ENCODE measurements at regions of chr21 and their contacts with region 1.

Region 1: DNA sequence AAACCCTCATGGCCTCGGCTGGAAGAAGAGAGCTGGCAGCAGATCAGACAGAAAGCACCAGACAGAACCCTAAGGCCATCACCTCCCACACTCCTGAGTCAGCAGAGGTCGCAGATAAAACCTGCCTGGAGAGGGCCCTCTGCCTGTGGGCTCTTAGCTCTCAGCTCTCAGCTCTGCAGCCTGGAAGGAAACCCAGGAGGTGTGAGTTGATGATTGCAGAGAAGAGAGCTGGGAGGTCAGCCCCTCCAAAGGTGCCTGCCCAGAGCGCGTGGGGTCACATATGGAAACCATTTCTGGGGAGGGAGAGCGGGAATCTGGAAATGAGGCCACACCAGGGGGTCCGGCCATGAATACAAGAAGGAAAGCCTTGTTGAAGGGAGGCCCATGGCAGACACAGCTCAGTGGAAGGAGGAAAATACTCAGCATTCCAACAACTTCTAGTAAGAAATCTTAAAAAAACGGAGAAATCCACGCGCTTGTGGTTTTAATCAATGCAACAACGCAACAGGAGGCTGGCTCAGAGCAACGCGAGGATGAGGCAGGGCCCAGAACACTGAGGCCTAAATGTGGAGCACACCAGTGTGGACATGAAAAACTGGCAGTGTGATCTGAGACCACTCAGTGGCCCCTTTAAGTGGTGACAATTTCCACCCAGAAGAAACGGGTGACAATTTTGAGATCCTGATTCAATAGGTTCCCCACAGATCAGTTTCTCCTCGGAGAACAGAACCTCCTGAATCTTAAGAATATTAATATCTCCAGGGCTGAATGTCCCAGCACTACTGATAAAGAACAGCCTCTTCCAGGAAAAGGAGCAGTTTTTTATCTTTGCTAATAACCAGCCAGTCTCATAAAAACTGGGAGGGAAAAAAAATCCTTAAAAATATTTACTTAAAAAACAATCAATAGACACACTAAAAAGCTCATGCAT is 45.7 kb downstream of the PSMG1 start:
- DNase-seq: no peak
- H3K4me3 ChIP-seq: no peak overlapping the region
- H3K27ac ChIP-seq: no peak overlapping the region
- H3K4me1 ChIP-seq: no peaks in the 10 kb centered on the region
- CTCF ChIP-seq: no peak

Region 2: GRCh38 chr21:38219049-38219628 is 918.4 kb before region 1 on chr21:
- CTCF ChIA-PET with region 1: no interaction called
- POLR2A ChIA-PET with region 1: no interaction called
- intact Hi-C with region 1: loop called (anchors 10 kb)
- DNase-seq: peak; percentile 53
- H3K4me3 ChIP-seq: no peak overlapping the region
- H3K27ac ChIP-seq: no peak overlapping the region
- H3K4me1 ChIP-seq: no peaks in the 10 kb centered on the region
- CTCF ChIP-seq: peak; percentile 96

Region 3: GRCh38 chr21:38505654-38506515 is 631.6 kb before region 1 on chr21:
- CTCF ChIA-PET with region 1: no interaction called
- POLR2A ChIA-PET with region 1: no interaction called
- intact Hi-C with region 1: loop called (anchors 2 kb)
- DNase-seq: peak; percentile 48
- H3K4me3 ChIP-seq: no peak overlapping the region
- H3K27ac ChIP-seq: no peak overlapping the region
- H3K4me1 ChIP-seq: no peaks in the 10 kb centered on the region
- CTCF ChIP-seq: peak; percentile 77

Region 4: DNA sequence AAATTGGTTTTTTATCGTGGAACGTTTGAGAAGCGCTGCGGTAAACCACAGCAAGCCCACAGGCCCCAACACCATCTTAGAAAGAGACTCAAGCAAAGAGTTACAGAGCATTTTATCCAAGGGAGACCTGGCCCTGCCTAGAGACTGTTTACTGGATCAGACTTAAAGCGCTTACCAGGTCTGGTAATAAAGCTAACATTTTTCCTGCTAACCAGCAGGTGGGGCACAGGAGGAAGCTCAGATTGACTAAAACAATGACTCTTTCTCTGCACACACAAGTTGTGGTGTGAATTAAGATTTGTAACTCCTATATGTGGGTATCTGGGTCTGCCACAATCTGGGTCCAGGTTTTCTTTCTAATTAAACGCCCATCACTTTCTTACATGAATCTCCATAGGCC is 468.3 kb before region 1 on chr21:
- CTCF ChIA-PET with region 1: no interaction called
- POLR2A ChIA-PET with region 1: no interaction called
- intact Hi-C with region 1: loop called (anchors 2 kb)
- DNase-seq: peak; percentile 19
- H3K4me3 ChIP-seq: no peak overlapping the region
- H3K27ac ChIP-seq: no peak overlapping the region
- H3K4me1 ChIP-seq: no peaks in the 10 kb centered on the region
- CTCF ChIP-seq: peak; percentile 65

Region 5: DNA sequence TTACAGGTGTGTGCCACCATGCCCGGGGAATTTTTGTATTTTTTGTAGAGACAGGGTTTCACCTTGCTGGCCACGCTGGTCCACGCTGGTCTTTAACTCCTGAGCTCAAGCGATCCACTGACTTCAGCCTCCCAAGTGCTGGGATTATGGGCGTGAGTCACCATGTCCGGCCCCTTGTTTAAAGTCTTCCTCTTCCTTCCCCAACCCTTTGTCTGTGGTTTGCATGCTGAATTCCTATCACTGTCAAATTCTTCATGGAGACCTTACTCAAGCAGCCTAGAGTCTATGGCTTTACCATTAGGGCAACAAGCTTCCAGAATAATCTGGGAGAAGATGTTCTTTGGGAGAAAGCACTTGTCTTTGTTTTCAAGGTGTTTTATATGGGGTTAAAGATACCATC is 510.0 kb after region 1 on chr21:
- CTCF ChIA-PET with region 1: no interaction called
- POLR2A ChIA-PET with region 1: no interaction called
- intact Hi-C with region 1: no loop called
- DNase-seq: no peak
- H3K4me3 ChIP-seq: no peak overlapping the region
- H3K27ac ChIP-seq: no peak overlapping the region
- H3K4me1 ChIP-seq: no peaks in the 10 kb centered on the region
- CTCF ChIP-seq: no peak

Region 6: GRCh38 chr21:39754811-39755210 is 617.3 kb after region 1 on chr21:
- CTCF ChIA-PET with region 1: no interaction called
- POLR2A ChIA-PET with region 1: no interaction called
- intact Hi-C with region 1: no loop called
- DNase-seq: no peak
- H3K4me3 ChIP-seq: no peak overlapping the region
- H3K27ac ChIP-seq: no peak overlapping the region
- H3K4me1 ChIP-seq: no peaks in the 10 kb centered on the region
- CTCF ChIP-seq: no peak